PC-3 (cell line): ENCODE measurements at regions of chr20 and their contacts with region 1.

Region 1: DNA sequence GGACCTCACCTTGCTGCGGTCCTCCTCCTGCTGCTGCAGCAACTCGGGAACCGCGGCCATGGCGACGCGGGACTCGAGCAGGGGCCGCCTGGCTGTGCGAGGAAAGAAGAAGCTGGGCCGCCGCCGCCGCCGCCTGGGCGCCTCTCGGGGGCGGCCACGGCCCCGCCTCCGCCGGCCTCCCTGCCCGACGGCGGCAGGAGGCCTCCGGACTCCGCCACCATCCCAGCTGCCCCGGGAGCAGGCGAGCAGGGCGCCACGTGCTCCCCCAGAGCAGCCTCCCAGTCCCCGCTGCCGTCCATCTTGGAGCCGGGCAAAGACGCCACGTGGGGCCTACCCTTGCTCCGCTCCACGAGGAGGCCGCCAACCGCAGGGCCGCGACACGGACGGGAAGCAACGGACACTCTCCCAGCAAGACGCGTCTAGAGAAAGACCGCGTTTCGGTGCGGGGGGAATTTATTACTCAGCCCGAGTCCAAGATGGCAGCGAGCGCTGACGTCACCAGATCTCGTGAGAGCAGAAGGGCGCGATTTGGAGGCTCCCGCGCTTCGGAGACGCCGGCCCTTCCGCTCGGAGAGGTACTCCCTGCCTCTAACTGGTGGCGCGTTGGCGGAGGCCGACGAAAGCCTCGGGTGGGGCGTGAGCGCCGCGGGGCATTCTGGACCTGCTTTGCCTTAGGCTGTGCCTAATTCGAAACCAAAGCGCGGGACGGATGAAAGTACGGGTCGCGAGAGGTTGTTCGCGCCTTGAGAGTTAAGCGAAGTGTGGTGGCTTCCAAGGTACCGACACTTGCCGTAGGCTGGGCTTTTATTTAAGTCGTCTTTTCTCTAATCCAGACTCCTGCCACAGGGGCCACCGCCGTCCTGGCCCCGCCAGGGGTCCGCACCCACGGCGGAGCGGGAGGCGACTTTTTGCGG is at the starts of genes MGME1 and SNX5:
- DNase-seq: peak; percentile 100
- ATAC-seq: peak; percentile 84
- H3K4me3 ChIP-seq: peak within 1 kb of the TSS; percentile 74
- H3K27ac ChIP-seq: peak within 1 kb of the TSS; percentile 95
- H3K4me1 ChIP-seq: peaks cover 59% of the 10 kb centered on the region
- H3K27me3 ChIP-seq: no peaks in the 10 kb centered on the region
- CTCF ChIP-seq: no peak
- total RNA-seq, gene MGME1: 15.1 and 18.8 TPM in 2 replicates
- total RNA-seq, gene SNX5: 159 and 189 TPM in 2 replicates

Region 2: GRCh38 chr20:17558154-17558940 is 410.3 kb before region 1 on chr20:
- CTCF ChIA-PET with region 1: no interaction called
- POLR2A ChIA-PET with region 1: no interaction called
- intact Hi-C with region 1: loop called (anchors 1 kb)
- DNase-seq: peak; percentile 95
- ATAC-seq: peak; percentile 76
- H3K4me3 ChIP-seq: peak overlapping the region; percentile 64
- H3K27ac ChIP-seq: peak overlapping the region; percentile 98
- H3K4me1 ChIP-seq: peaks cover 50% of the 10 kb centered on the region
- H3K27me3 ChIP-seq: no peaks in the 10 kb centered on the region
- CTCF ChIP-seq: no peak

Region 3: GRCh38 chr20:18056174-18057100 is 87.8 kb after region 1 on chr20:
- CTCF ChIA-PET with region 1: no interaction called
- POLR2A ChIA-PET with region 1: no interaction called
- intact Hi-C with region 1: loop called (anchors 2 kb)
- DNase-seq: peak; percentile 60
- ATAC-seq: peak; percentile 41
- H3K4me3 ChIP-seq: peak overlapping the region; percentile 90
- H3K27ac ChIP-seq: peak overlapping the region; percentile 4; the same call in 1 of the 2 replicates
- H3K4me1 ChIP-seq: peaks cover 29% of the 10 kb centered on the region
- H3K27me3 ChIP-seq: 0 out of 2 replicates have a peak, but pooled peaks cover 4% of the 10 kb centered on the region
- CTCF ChIP-seq: no peak

Region 4: DNA sequence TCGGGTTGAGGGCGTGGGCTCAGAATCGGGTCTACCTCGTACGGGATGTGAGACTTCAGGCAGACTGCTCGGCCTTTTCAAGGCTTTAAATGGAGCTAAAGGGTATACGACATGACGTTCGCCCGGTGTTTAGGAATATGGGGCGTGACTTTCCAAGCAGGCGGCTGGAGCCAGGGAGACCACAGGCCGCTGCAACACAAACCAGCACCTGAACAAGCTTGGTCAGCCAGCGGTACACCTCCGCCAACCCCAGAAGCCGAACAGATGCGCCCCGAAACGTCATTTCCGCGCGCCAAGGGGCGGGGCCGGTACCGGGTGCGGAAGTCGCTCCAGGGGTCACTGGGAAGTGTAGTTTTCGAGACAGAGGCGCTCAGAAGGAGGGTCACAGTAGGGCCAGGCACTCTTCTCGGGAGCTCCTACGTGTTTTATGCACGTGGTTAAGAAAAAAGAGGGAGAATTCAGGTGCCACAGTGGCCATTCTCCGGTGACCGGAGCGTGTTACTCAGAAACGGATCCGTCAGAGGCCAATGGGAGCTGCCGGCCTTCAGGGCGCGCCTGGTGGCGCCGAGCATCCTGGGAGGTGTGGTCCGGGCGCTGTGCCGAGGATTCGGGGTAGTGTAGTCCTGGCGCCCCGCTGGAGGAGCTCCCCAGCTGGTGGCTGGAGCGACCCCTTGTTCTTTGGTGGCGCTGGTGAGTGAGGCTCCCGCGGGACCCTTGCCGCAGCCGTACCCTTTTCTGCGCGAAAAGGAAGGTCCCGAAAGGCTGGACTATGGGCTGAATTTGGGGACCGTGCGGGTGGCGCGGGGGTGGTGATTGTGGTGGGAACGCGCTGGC is 319.5 kb after region 1 on chr20 and contains the start of gene ZNF133:
- CTCF ChIA-PET with region 1: no interaction called
- POLR2A ChIA-PET with region 1: no interaction called
- intact Hi-C with region 1: loop called (anchors 10 kb)
- DNase-seq: peak; percentile 98
- ATAC-seq: peak; percentile 97
- H3K4me3 ChIP-seq: peak within 1 kb of the TSS; percentile 98
- H3K27ac ChIP-seq: peak within 1 kb of the TSS; percentile 76
- H3K4me1 ChIP-seq: peaks cover 22% of the 10 kb centered on the region
- H3K27me3 ChIP-seq: no peaks in the 10 kb centered on the region
- CTCF ChIP-seq: peak; percentile 27; the same call in 1 of the 2 replicates
- total RNA-seq, gene ZNF133: 16.3 and 17.1 TPM in 2 replicates